Activated CD4-positive, alpha-beta T cell treated with anti-CD3 and anti-CD28 coated beads, Interleukin-2, amount 10 ng/mL, durations not matched to agents 24 days and 14 days (primary cell): ENCODE measurements at regions of chr10 and their contacts with region 1.

Region 1: DNA sequence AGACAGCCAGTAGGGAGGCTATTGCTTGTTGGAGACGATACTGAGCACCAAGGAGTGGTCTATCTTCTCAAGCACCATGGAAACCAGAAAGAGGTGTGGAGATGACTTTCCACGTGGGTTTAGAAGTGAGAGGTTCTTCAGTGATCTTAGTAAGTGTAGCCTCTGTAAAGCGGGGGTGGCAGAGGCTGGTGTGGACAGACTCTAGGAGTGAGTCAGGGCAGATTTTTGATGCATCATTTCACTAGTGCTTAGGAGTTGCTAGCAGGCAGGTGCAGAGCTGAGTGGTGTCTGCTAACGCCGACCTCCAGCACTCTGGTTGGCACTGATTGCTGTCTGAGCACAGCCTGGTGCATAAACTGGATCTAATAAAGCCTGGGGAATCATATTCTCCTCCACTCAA is 78.4 kb upstream of the ADO start:
- DNase-seq: peak; percentile 68
- H3K4me3 Mint-ChIP-seq: peak overlapping the region; percentile 20
- H3K27ac Mint-ChIP-seq: peak overlapping the region; percentile 76
- H3K4me1 Mint-ChIP-seq: peaks cover 51% of the 10 kb centered on the region
- H3K27me3 Mint-ChIP-seq: peaks cover 1% of the 10 kb centered on the region

Region 2: DNA sequence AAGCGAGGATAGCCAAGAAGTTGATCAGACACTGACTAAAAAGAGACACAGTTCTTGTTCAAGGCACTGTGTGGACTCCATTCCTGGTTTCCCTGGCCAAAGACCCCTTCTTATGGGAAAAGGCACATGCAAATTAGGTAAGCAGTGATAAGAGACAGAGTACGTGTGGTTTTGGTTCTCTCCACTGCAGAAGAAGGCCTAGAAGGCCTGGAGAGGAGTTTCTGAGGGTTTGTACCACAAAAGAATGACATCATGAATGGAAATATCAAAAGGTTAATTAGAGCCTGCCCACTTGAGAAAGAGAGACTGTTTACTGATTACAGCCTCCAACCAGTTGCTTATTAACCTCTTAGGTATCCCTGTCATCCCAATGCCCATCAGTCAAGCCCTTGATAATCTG is 214.5 kb before region 1 on chr10:
- intact Hi-C with region 1: no loop called
- DNase-seq: peak; percentile 46
- H3K4me3 Mint-ChIP-seq: no peak overlapping the region
- H3K27ac Mint-ChIP-seq: no peak overlapping the region
- H3K4me1 Mint-ChIP-seq: peaks cover 4% of the 10 kb centered on the region
- H3K27me3 Mint-ChIP-seq: peaks cover 20% of the 10 kb centered on the region

Region 3: GRCh38 chr10:62528441-62528840 is 197.7 kb before region 1 on chr10:
- intact Hi-C with region 1: loop called (anchors 5 kb)
- DNase-seq: peak; percentile 65
- H3K4me3 Mint-ChIP-seq: peak overlapping the region; percentile 27
- H3K27ac Mint-ChIP-seq: peak overlapping the region; percentile 39
- H3K4me1 Mint-ChIP-seq: peaks cover 33% of the 10 kb centered on the region
- H3K27me3 Mint-ChIP-seq: peaks cover 11% of the 10 kb centered on the region

Region 4: DNA sequence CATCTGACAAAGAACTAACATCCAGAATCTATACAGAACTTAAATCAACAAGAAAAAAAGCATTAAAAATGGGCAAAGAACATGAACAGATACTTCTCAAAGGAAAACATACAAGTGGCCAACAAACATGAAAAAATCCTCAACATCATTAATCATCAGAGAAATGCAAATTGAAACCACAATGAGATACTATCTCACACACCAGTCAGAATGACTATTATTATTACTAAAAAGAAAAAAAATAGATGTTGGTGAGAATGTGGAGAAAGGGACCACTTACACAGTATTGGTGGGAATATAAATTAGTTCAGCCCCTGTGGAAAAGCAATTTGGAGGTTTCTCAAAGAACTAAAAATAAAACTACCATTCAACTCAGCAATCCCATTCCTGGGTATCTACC is 10.8 kb before region 1 on chr10:
- intact Hi-C with region 1: loop called (anchors 1 kb)
- DNase-seq: no peak
- H3K4me3 Mint-ChIP-seq: no peak overlapping the region
- H3K27ac Mint-ChIP-seq: no peak overlapping the region
- H3K4me1 Mint-ChIP-seq: peaks cover 11% of the 10 kb centered on the region
- H3K27me3 Mint-ChIP-seq: peaks cover 2% of the 10 kb centered on the region

Region 5: GRCh38 chr10:62760401-62760800 is 34.3 kb after region 1 on chr10:
- intact Hi-C with region 1: no loop called
- DNase-seq: no peak
- H3K4me3 Mint-ChIP-seq: no peak overlapping the region
- H3K27ac Mint-ChIP-seq: no peak overlapping the region
- H3K4me1 Mint-ChIP-seq: peaks cover 17% of the 10 kb centered on the region
- H3K27me3 Mint-ChIP-seq: peaks cover 1% of the 10 kb centered on the region

Region 6: GRCh38 chr10:62779487-62780248 is 53.5 kb after region 1 on chr10:
- intact Hi-C with region 1: loop called (anchors 1 kb)
- DNase-seq: peak; percentile 84
- H3K4me3 Mint-ChIP-seq: peak overlapping the region; percentile 42
- H3K27ac Mint-ChIP-seq: peak overlapping the region; percentile 68
- H3K4me1 Mint-ChIP-seq: peaks cover 31% of the 10 kb centered on the region
- H3K27me3 Mint-ChIP-seq: peaks cover 12% of the 10 kb centered on the region